ENCODE measurements at regions of chr4 and their contacts with region 1.

Region 1: DNA sequence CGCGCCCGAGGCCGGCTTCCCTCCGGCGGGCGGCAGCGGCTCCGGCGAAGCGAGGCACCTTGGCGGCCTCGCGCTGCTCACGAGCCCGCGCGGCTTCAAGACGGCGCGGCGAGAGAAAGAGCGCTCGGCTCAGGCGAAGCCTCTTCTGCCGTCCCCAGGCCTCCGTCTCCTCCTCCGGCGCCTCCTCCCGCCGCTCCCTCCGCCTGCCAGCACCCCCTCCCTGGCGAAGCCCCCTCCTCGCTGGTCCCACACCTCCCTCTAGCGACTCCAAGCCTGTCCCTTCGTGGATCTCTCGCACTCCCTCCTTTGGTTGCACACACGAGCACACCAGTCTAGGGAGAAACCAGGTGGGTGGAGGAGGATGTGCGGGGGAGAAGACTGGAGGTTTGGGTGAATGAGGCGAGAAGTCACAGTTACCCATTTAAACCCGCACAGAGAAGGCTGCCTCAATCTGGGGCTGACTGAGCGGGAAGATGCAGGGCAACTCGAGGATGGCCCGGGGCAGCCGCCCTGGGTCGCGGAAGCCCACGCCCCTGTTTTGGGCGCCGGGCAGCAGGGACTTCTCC is at the start of gene CAMK2D:
- DNase-seq: peak; percentile 91
- ATAC-seq: peak; percentile 46
- H3K4me3 ChIP-seq: peak within 1 kb of the TSS; percentile 91 to 96 (median 93)
- H3K4me3 Mint-ChIP-seq: peak within 1 kb of the TSS; percentile 94
- H3K27ac ChIP-seq: peak within 1 kb of the TSS; percentile 98 to 99
- H3K27ac Mint-ChIP-seq: peak within 1 kb of the TSS; percentile 98
- H3K4me1 ChIP-seq: peaks cover 16 to 27% of the 10 kb centered on the region in 2 donors
- H3K4me1 Mint-ChIP-seq: peaks cover 36% of the 10 kb centered on the region
- H3K27me3 ChIP-seq: no peaks in the 10 kb centered on the region
- H3K27me3 Mint-ChIP-seq: no peaks in the 10 kb centered on the region
- CTCF ChIP-seq: peak; percentile 34
- total RNA-seq, gene CAMK2D: 55.9 and 57.0 TPM in 2 replicates

Region 2: GRCh38 chr4:113564493-113564892 is 197.2 kb before region 1 on chr4:
- CTCF ChIA-PET with region 1: interaction called, 3 read pairs
- POLR2A ChIA-PET with region 1: interaction called, 6 read pairs
- intact Hi-C with region 1: loop called (anchors 1 kb)
- DNase-seq: no peak
- ATAC-seq: peak; percentile 54
- H3K4me3 ChIP-seq: peak overlapping the region in 3 of 5 experiments; percentile 10 to 54 (median 19)
- H3K4me3 Mint-ChIP-seq: peak overlapping the region; percentile 87
- H3K27ac ChIP-seq: peak overlapping the region; percentile 74 to 79
- H3K27ac Mint-ChIP-seq: peak overlapping the region; percentile 98
- H3K4me1 ChIP-seq: peaks cover 60 to 88% of the 10 kb centered on the region in 2 donors
- H3K4me1 Mint-ChIP-seq: peaks cover 74% of the 10 kb centered on the region
- H3K27me3 ChIP-seq: no peaks in the 10 kb centered on the region
- H3K27me3 Mint-ChIP-seq: no peaks in the 10 kb centered on the region
- CTCF ChIP-seq: no peak

Region 3: DNA sequence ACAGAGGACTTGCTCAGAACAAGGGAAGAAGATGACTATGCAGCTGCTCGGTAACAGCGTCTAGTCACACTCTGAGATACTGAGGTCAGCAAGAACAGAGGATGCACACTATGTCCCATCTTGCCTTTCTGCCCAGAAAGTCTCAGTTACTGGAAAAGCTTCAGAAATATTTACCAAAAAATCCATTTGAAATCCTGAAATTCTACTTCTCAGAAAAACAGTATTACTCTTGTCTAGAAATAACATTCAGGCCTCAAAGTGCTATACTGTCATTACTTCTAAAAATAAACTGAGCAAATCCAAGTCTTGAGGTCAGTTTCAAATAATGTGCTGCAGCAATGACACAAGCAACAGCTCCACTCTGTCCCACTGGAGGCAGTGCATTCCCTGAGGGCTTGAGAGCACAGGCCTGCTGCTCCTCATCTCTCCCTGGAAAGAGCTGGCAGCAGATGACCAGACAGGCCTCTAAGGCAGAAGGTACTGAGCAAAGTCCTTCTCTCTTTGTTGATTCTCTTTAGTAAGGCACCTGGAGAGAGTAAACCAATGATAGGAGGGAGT is 77.1 kb before region 1 on chr4:
- CTCF ChIA-PET with region 1: no interaction called
- POLR2A ChIA-PET with region 1: no interaction called
- intact Hi-C with region 1: loop called (anchors 2 kb)
- DNase-seq: no peak
- ATAC-seq: no peak
- H3K4me3 ChIP-seq: no peak overlapping the region
- H3K4me3 Mint-ChIP-seq: no peak overlapping the region
- H3K27ac ChIP-seq: peak overlapping the region in 1 of 2 donors; percentile 83
- H3K27ac Mint-ChIP-seq: peak overlapping the region; percentile 62
- H3K4me1 ChIP-seq: peaks cover 33 to 38% of the 10 kb centered on the region in 2 donors
- H3K4me1 Mint-ChIP-seq: peaks cover 54% of the 10 kb centered on the region
- H3K27me3 ChIP-seq: no peaks in the 10 kb centered on the region
- H3K27me3 Mint-ChIP-seq: no peaks in the 10 kb centered on the region
- CTCF ChIP-seq: no peak

Region 4: GRCh38 chr4:113781439-113782040 is 19.8 kb after region 1 on chr4:
- CTCF ChIA-PET with region 1: no interaction called
- POLR2A ChIA-PET with region 1: no interaction called
- intact Hi-C with region 1: loop called (anchors 2 kb)
- DNase-seq: peak; percentile 54
- ATAC-seq: no peak
- H3K4me3 ChIP-seq: no peak overlapping the region
- H3K4me3 Mint-ChIP-seq: no peak overlapping the region
- H3K27ac ChIP-seq: no peak overlapping the region
- H3K27ac Mint-ChIP-seq: no peak overlapping the region
- H3K4me1 ChIP-seq: no peaks in the 10 kb centered on the region
- H3K4me1 Mint-ChIP-seq: no peaks in the 10 kb centered on the region
- H3K27me3 ChIP-seq: peaks cover 0 to 4% (median 1%) of the 10 kb centered on the region in 4 experiments
- H3K27me3 Mint-ChIP-seq: peaks cover 12% of the 10 kb centered on the region
- CTCF ChIP-seq: peak; percentile 85

Region 5: GRCh38 chr4:114598191-114599121 is 836.8 kb after region 1 on chr4 and contains the start of gene UGT8:
- CTCF ChIA-PET with region 1: no interaction called
- POLR2A ChIA-PET with region 1: no interaction called
- intact Hi-C with region 1: loop called (anchors 5 kb)
- DNase-seq: peak; percentile 91
- ATAC-seq: peak; percentile 74
- H3K4me3 ChIP-seq: peak within 1 kb of the TSS; percentile 57 to 96 (median 85)
- H3K4me3 Mint-ChIP-seq: peak within 1 kb of the TSS; percentile 89
- H3K27ac ChIP-seq: peak within 1 kb of the TSS; percentile 78 to 93
- H3K27ac Mint-ChIP-seq: peak within 1 kb of the TSS; percentile 96
- H3K4me1 ChIP-seq: peaks cover 40 to 43% of the 10 kb centered on the region in 2 donors
- H3K4me1 Mint-ChIP-seq: peaks cover 18% of the 10 kb centered on the region
- H3K27me3 ChIP-seq: no peaks in the 10 kb centered on the region
- H3K27me3 Mint-ChIP-seq: no peaks in the 10 kb centered on the region
- CTCF ChIP-seq: no peak
- total RNA-seq, gene UGT8: 23.2 and 24.0 TPM in 2 replicates

Measured in B cell (primary cell).